GM12878 (cell line): ENCODE measurements at regions of chr1 and their contacts with region 1.

Region 1: DNA sequence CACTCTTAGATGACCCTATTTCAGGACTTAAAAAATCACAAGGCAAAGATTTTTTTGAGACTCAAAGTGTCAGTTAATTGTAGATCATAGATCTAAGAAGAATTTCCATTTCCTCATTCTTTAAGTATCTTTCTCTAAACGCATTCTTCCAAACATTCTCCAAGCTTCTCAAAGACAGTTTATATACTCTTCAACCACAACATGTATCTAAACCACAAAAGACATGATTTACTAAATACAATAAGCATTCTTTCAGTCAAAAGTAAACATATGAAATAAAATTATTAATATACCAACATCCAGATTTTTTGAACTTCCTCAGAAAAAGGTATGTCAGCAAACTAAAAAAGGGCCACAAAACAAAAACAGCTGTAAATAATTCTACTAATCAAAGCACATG is 24.4 kb downstream of the RC3H1 start:
- DNase-seq: no peak
- ATAC-seq: no peak
- H3K4me3 ChIP-seq: no peak overlapping the region
- H3K27ac ChIP-seq: no peak overlapping the region
- H3K4me1 ChIP-seq: no peaks in the 10 kb centered on the region; the same call in 1 of the 2 replicates
- H3K27me3 ChIP-seq: no peaks in the 10 kb centered on the region
- CTCF ChIP-seq: no peak
- EP300 ChIP-seq: no peak
- POLR2A ChIP-seq: no peak
- RAD21 ChIP-seq: no peak

Region 2: GRCh38 chr1:173986951-173987350 is 10.8 kb before region 1 on chr1:
- CTCF ChIA-PET with region 1: interaction called, 4 read pairs
- POLR2A ChIA-PET with region 1: interaction called, 3 read pairs
- RAD21 ChIA-PET with region 1: no interaction called
- SMC1A ChIA-PET with region 1: interaction called, 22 read pairs
- in situ Hi-C with region 1: no loop called
- intact Hi-C with region 1: no loop called
- DNase-seq: no peak
- ATAC-seq: no peak
- H3K4me3 ChIP-seq: no peak overlapping the region
- H3K27ac ChIP-seq: no peak overlapping the region
- H3K4me1 ChIP-seq: no peaks in the 10 kb centered on the region
- H3K27me3 ChIP-seq: no peaks in the 10 kb centered on the region
- CTCF ChIP-seq: no peak
- EP300 ChIP-seq: no peak
- POLR2A ChIP-seq: no peak
- RAD21 ChIP-seq: no peak